ENCODE measurements at regions of chr20 and their contacts with region 1.

Region 1: GRCh38 chr20:24694727-24695597 is 225.5 kb downstream of the SYNDIG1 start:
- DNase-seq: peak in 2 of 5 donors; percentile 27 to 54
- H3K4me3 ChIP-seq: no peak overlapping the region
- H3K27ac ChIP-seq: no peak overlapping the region
- H3K4me1 ChIP-seq: peaks cover 7% of the 10 kb centered on the region
- H3K27me3 ChIP-seq: no peaks in the 10 kb centered on the region
- CTCF ChIP-seq: no peak
- EP300 ChIP-seq: no peak
- POLR2A ChIP-seq: no peak

Region 2: GRCh38 chr20:24634855-24635254 is 60.1 kb before region 1 on chr20:
- intact Hi-C with region 1: loop called in 1 of 4 experiments (anchors 10 kb)
- DNase-seq: no peak
- H3K4me3 ChIP-seq: no peak overlapping the region
- H3K27ac ChIP-seq: no peak overlapping the region
- H3K4me1 ChIP-seq: no peaks in the 10 kb centered on the region
- H3K27me3 ChIP-seq: no peaks in the 10 kb centered on the region
- CTCF ChIP-seq: no peak
- EP300 ChIP-seq: no peak
- POLR2A ChIP-seq: no peak

Region 3: DNA sequence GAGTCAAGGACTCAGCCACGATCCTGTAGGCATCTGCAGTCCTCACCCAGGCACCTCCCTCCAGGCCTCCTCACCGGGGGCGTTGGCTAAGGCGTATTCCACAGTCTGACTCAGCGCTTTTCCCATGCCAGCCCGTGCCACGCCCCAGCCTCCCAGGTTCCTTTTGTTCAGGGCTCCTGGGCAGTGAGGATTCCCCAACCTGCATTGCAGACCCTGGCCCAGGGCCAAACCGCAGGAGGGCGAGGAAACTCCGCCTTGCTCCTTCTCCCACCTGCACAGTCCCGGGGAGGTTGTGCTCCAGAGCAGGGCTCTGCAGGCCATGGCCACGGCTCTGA is 51.4 kb after region 1 on chr20:
- intact Hi-C with region 1: loop called in 1 of 4 experiments (anchors 10 kb)
- DNase-seq: no peak
- H3K4me3 ChIP-seq: no peak overlapping the region
- H3K27ac ChIP-seq: no peak overlapping the region
- H3K4me1 ChIP-seq: no peaks in the 10 kb centered on the region
- H3K27me3 ChIP-seq: no peaks in the 10 kb centered on the region
- CTCF ChIP-seq: no peak
- EP300 ChIP-seq: no peak
- POLR2A ChIP-seq: no peak

Region 4: DNA sequence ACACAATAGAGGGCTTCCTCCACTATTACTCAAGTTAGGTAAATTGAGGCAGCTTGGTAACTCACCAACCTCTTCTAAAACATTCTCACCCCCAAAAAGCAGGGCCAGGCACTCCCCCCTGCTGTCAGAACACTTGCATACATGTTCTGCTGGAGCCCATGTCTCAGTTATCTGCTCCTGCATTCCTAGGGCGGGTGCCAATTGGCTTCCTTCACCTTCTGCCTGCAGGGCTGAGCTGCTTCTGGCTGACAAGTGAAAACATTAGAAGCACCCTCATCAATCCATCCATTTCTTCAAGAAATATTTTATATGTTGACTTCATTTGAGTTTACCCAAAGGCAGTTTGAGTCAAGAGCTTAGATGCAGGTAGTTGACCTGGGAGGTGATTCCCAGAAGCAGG is 496.1 kb after region 1 on chr20:
- intact Hi-C with region 1: no loop called
- DNase-seq: peak in 4 of 5 donors; percentile 56 to 75 (median 62)
- H3K4me3 ChIP-seq: no peak overlapping the region
- H3K27ac ChIP-seq: peak overlapping the region in 1 of 2 donors; percentile 41
- H3K4me1 ChIP-seq: peaks cover 35% of the 10 kb centered on the region
- H3K27me3 ChIP-seq: no peaks in the 10 kb centered on the region
- CTCF ChIP-seq: no peak
- EP300 ChIP-seq: no peak
- POLR2A ChIP-seq: no peak